Common myeloid progenitor, CD34-positive (primary cell): ENCODE measurements at regions of chr19 and their contacts with region 1.

Region 1: GRCh38 chr19:48110350-48110966 is at the start of gene PLA2G4C:
- DNase-seq: peak; percentile 86 to 90 (median 87)
- H3K4me3 ChIP-seq: peak within 1 kb of the TSS; percentile 0 to 80 (median 62)
- H3K27ac ChIP-seq: peak within 1 kb of the TSS; percentile 58 to 61
- H3K4me1 ChIP-seq: peaks cover 0 to 21% (median 10%) of the 10 kb centered on the region in 4 experiments
- H3K27me3 ChIP-seq: no peaks in the 10 kb centered on the region

Region 2: GRCh38 chr19:48064509-48064908 is 45.9 kb before region 1 on chr19:
- CTCF ChIA-PET with region 1: no interaction called
- POLR2A ChIA-PET with region 1: no interaction called
- DNase-seq: no peak
- H3K4me3 ChIP-seq: no peak overlapping the region
- H3K27ac ChIP-seq: no peak overlapping the region
- H3K4me1 ChIP-seq: no peaks in the 10 kb centered on the region
- H3K27me3 ChIP-seq: peaks cover 0 to 11% (median 7%) of the 10 kb centered on the region in 5 experiments

Region 3: DNA sequence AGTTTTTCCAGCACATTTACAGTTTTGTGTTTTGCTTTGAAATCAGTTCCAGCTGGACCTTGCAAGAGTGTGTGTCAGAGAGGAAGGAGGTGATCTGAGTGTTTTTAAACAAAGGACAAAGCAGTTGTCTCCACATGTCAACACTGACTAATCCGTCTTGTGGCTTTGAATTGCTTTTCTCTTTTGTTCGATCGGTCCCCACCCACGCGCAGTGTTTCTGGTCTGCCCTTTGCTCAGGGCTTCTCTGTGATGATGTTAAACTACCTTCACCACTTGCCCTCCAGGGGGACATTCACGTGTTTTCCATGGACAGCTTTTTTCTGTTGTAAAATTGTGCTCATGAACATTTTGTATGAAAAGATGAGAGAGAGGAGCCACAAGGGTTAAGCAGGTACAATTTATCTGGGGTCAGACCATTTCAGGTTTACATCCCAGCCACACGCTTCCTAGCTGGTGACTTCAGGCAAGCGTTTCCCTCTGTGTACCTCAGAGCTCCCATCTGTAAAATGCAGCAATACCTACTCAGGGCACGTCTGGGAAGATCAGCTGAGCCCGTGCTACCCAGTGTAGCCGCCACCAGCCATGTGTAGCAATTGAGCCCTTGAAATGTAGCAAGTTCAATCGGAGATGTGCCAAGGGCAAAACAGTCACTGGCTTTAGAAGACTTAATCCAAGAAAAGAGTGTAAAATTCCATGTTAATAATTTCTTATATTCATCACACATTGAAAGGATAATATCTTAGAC is 13.6 kb after region 1 on chr19:
- CTCF ChIA-PET with region 1: interaction called, 53 read pairs
- POLR2A ChIA-PET with region 1: no interaction called
- DNase-seq: peak in 1 of 3 donors; percentile 24
- H3K4me3 ChIP-seq: no peak overlapping the region
- H3K27ac ChIP-seq: no peak overlapping the region
- H3K4me1 ChIP-seq: peaks cover 0 to 21% (median 18%) of the 10 kb centered on the region in 4 experiments
- H3K27me3 ChIP-seq: no peaks in the 10 kb centered on the region

Region 4: GRCh38 chr19:48152551-48152950 is 42.1 kb after region 1 on chr19:
- CTCF ChIA-PET with region 1: interaction called, 85 read pairs
- POLR2A ChIA-PET with region 1: no interaction called
- DNase-seq: peak; percentile 68 to 82 (median 81)
- H3K4me3 ChIP-seq: no peak overlapping the region
- H3K27ac ChIP-seq: no peak overlapping the region
- H3K4me1 ChIP-seq: no peaks in the 10 kb centered on the region
- H3K27me3 ChIP-seq: no peaks in the 10 kb centered on the region